Vagina (tissue), 2 donors: ENCODE measurements at regions of chr11 and their contacts with region 1.

Region 1: GRCh38 chr11:45298718-45299117 is 12.6 kb upstream of the SYT13 start:
- DNase-seq: peak; percentile 29 to 40
- H3K4me3 ChIP-seq: no peak overlapping the region
- H3K27ac ChIP-seq: no peak overlapping the region
- H3K4me1 ChIP-seq: no peaks in the 10 kb centered on the region
- H3K27me3 ChIP-seq: no peaks in the 10 kb centered on the region
- CTCF ChIP-seq: no peak
- POLR2A ChIP-seq: no peak

Region 2: GRCh38 chr11:45110562-45110961 is 188.2 kb before region 1 on chr11:
- intact Hi-C with region 1: loop called (anchors 5 kb)
- DNase-seq: peak; percentile 83 to 91
- H3K4me3 ChIP-seq: no peak overlapping the region
- H3K27ac ChIP-seq: no peak overlapping the region
- H3K4me1 ChIP-seq: no peaks in the 10 kb centered on the region
- H3K27me3 ChIP-seq: no peaks in the 10 kb centered on the region
- CTCF ChIP-seq: peak; percentile 49 to 88 (median 82)
- POLR2A ChIP-seq: no peak

Region 3: DNA sequence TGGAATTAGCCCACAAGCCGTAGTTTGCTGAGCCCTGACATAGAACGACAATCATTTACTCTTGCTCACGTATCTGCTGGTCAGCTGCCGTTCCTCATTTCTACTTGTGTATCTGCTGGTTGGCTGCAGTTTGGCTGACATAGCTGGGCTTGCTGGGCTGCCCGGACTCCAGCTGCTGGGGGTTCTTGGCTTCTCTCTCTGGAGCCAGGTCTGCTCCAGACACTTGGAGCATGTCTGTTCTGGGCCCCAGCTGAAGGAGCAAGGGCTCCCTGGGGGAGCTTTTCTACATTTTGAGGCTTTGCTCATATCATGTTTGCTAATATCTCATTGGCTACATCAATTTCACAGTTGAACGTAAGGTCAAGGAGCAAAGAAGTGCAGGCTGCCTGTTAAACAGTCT is 105.0 kb before region 1 on chr11:
- intact Hi-C with region 1: no loop called
- DNase-seq: no peak
- H3K4me3 ChIP-seq: no peak overlapping the region
- H3K27ac ChIP-seq: no peak overlapping the region
- H3K4me1 ChIP-seq: no peaks in the 10 kb centered on the region
- H3K27me3 ChIP-seq: no peaks in the 10 kb centered on the region
- CTCF ChIP-seq: no peak
- POLR2A ChIP-seq: no peak

Region 4: DNA sequence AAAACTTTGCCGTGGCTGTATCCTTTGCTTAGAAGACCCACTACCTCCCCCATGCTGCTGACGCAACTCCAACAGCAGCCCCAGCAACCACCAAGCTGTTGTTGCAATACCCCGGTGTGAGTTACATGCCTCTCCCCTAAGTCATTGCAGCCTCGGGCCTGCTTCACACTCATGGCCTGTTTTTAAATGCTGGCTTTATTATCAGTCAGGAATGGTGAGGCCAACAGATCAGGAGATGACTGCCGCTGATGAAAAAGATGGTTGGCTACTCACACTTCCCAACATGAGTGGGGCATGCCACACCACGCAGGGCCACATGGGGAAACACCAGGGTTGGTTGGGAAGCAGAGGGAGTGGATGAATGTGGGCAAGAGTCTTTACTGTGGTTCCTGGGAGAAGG is 158.9 kb after region 1 on chr11:
- intact Hi-C with region 1: no loop called
- DNase-seq: no peak
- H3K4me3 ChIP-seq: no peak overlapping the region
- H3K27ac ChIP-seq: no peak overlapping the region
- H3K4me1 ChIP-seq: no peaks in the 10 kb centered on the region
- H3K27me3 ChIP-seq: no peaks in the 10 kb centered on the region
- CTCF ChIP-seq: no peak
- POLR2A ChIP-seq: no peak